Caco-2 (cell line): ENCODE measurements at regions of chr2 and their contacts with region 1.

Region 1: GRCh38 chr2:189698020-189698887 is 23.8 kb downstream of the ANKAR start:
- DNase-seq: peak in 1 of 2 experiments; percentile 37
- H3K4me3 ChIP-seq: no peak overlapping the region
- H3K4me3 Mint-ChIP-seq: no peak overlapping the region
- H3K27ac Mint-ChIP-seq: no peak overlapping the region
- H3K4me1 ChIP-seq: no peaks in the 10 kb centered on the region
- H3K4me1 Mint-ChIP-seq: no peaks in the 10 kb centered on the region
- H3K27me3 ChIP-seq: no peaks in the 10 kb centered on the region
- H3K27me3 Mint-ChIP-seq: no peaks in the 10 kb centered on the region
- CTCF ChIP-seq: peak; percentile 48 to 69

Region 2: GRCh38 chr2:189467160-189467559 is 231.1 kb before region 1 on chr2:
- CTCF ChIA-PET with region 1: no interaction called
- POLR2A ChIA-PET with region 1: no interaction called
- intact Hi-C with region 1: no loop called
- DNase-seq: no peak
- H3K4me3 ChIP-seq: no peak overlapping the region
- H3K4me3 Mint-ChIP-seq: no peak overlapping the region
- H3K27ac Mint-ChIP-seq: no peak overlapping the region
- H3K4me1 ChIP-seq: no peaks in the 10 kb centered on the region
- H3K4me1 Mint-ChIP-seq: no peaks in the 10 kb centered on the region
- H3K27me3 ChIP-seq: no peaks in the 10 kb centered on the region
- H3K27me3 Mint-ChIP-seq: no peaks in the 10 kb centered on the region
- CTCF ChIP-seq: no peak

Region 3: GRCh38 chr2:189674374-189675112 is 23.7 kb before region 1 on chr2 and contains the start of gene ANKAR:
- CTCF ChIA-PET with region 1: interaction called, 6 read pairs
- POLR2A ChIA-PET with region 1: no interaction called
- intact Hi-C with region 1: loop called (anchors 1 kb)
- DNase-seq: peak; percentile 94 to 98
- H3K4me3 ChIP-seq: peak within 1 kb of the TSS; percentile 77
- H3K4me3 Mint-ChIP-seq: peak within 1 kb of the TSS; percentile 88
- H3K27ac Mint-ChIP-seq: peak within 1 kb of the TSS; percentile 92
- H3K4me1 ChIP-seq: no peaks in the 10 kb centered on the region
- H3K4me1 Mint-ChIP-seq: peaks cover 11% of the 10 kb centered on the region
- H3K27me3 ChIP-seq: no peaks in the 10 kb centered on the region
- H3K27me3 Mint-ChIP-seq: no peaks in the 10 kb centered on the region
- CTCF ChIP-seq: peak; percentile 68 to 79
- total RNA-seq, gene ANKAR: 2.2 and 4.7 TPM in 2 replicates

Region 4: DNA sequence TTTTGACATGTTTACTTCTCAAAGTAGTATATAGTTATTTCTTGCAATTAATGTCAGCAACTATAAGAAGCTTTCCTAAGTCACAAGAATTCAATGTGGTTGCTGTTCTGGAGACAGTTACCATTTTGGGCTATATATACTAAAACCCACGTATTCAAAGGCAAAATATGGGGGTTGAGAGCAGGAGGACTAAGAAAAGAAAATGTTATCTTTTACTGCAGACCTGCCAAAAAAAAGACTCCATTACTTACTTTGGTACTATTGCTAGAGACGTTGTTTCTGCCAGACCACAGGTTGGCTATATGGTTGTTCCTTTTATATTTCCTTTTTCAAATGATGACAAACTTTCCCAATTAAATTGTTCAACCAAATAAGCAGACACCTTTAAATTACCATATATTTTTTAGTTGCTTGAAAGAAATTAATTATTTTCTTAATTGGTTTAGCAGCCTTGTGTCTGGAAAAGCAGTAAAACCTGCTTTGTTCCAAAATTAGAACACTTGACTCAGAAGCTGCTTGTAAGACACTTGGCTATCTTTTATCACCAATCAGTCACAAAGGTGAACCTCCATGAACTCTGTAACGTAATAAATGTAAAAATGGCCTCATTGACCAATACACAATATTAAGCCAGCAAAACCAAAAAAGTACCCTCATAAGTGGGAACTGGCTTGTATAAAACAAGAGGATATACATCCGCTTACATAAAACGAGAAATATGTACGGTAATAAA is 72.5 kb after region 1 on chr2:
- CTCF ChIA-PET with region 1: no interaction called
- POLR2A ChIA-PET with region 1: no interaction called
- intact Hi-C with region 1: no loop called
- DNase-seq: no peak
- H3K4me3 ChIP-seq: no peak overlapping the region
- H3K4me3 Mint-ChIP-seq: no peak overlapping the region
- H3K27ac Mint-ChIP-seq: no peak overlapping the region
- H3K4me1 ChIP-seq: no peaks in the 10 kb centered on the region
- H3K4me1 Mint-ChIP-seq: no peaks in the 10 kb centered on the region
- H3K27me3 ChIP-seq: no peaks in the 10 kb centered on the region
- H3K27me3 Mint-ChIP-seq: no peaks in the 10 kb centered on the region
- CTCF ChIP-seq: no peak